Aorta (tissue), 5 donors: ENCODE measurements at regions of chr1 and their contacts with region 1.

Region 1: DNA sequence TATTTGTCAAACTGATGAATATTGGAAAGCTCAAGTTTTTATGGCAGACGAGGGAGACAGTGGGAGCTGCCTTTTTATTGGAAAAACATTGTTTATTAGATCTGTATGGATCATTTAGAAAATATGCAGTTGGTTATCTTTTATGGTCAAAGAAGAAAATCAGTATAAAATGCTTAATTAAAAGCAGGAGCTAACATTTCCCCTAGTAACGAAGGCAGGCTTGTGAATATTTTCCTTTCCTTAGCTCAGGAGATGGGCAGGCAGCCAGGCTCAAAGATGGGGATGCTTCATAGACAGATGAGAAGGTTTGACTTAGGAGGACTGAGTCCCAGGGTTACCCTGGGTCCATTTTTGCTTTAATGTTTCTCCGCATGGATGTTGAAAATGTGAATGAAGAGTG is 26.0 kb downstream of the ROR1 start:
- DNase-seq: no peak
- ATAC-seq: no peak
- H3K4me3 ChIP-seq: no peak overlapping the region
- H3K27ac ChIP-seq: no peak overlapping the region
- H3K4me1 ChIP-seq: peaks cover 0 to 3% of the 10 kb centered on the region in 2 donors
- H3K27me3 ChIP-seq: no peaks in the 10 kb centered on the region

Region 2: DNA sequence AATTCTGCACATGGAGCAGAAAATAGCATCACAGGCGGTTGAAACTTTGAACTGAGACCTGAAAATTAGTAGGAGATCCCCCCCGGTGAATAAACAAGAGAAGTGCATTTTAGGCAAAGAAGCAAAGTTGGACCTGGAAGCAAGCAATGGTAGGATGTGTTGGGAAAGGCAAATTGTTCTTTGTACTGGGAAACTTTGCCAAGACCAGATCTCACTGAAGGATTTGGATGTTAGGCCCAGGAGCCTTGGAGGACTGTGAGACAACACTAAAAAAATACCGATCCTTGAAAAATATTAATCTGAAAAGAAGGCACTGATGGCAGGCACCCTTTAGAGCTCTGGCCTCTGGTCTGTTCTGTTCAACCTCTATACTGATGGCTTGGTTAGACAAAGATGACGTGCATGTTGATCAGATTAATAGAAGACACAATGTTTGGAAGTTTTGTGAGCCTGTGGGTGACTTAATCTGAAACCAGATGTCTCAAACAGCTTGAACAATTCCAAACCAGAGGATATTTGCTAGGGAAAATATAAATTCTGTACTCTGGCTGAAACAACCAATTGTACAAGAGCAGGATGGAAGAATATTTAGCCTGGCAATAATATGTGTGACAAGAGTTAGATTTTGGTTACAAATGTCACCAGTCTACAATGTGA is 82.4 kb after region 1 on chr1:
- intact Hi-C with region 1: loop called in 1 of 2 experiments (anchors 5 kb)
- DNase-seq: no peak
- ATAC-seq: peak; percentile 28
- H3K4me3 ChIP-seq: no peak overlapping the region
- H3K27ac ChIP-seq: no peak overlapping the region
- H3K4me1 ChIP-seq: peaks cover 6 to 20% of the 10 kb centered on the region in 2 donors
- H3K27me3 ChIP-seq: no peaks in the 10 kb centered on the region